H1 (cell line): ENCODE measurements at regions of chr5 and their contacts with region 1.

Region 1: GRCh38 chr5:132963175-132964104 is at the start of gene AFF4:
- DNase-seq: peak; percentile 88 to 95
- H3K4me3 ChIP-seq: peak within 1 kb of the TSS; percentile 77 to 95 (median 86)
- H3K27ac ChIP-seq: peak within 1 kb of the TSS; percentile 89
- H3K4me1 ChIP-seq: no peaks in the 10 kb centered on the region
- H3K27me3 ChIP-seq: no peaks in the 10 kb centered on the region
- CTCF ChIP-seq: no peak
- EP300 ChIP-seq: peak; percentile 26 to 74; a peak in 2 of 3 replicates
- POLR2A ChIP-seq: peak; percentile 43 to 93
- RAD21 ChIP-seq: no peak
- total RNA-seq, gene AFF4: 61.4 and 63.7 TPM in 2 replicates

Region 2: DNA sequence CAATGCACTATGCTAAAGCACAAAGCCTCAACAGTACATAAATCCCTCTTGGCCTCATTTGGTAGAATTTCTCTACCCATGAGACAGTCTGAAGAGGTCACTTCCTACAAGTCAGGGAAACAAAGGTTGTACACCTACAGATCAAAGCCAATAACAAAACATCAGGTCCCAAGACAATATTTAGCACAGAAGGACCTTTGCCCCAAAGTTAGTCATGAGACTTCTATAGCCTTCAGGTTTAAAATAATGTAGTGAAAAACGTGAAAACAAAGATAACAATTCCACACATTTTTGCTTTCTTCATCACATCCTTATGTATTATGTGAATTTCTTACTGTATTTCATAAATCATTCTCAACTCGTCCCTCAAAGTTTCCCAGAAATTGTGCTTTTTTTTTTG is 15.8 kb before region 1 on chr5:
- CTCF ChIA-PET with region 1: no interaction called
- POLR2A ChIA-PET with region 1: interaction called, 12 read pairs
- DNase-seq: no peak
- H3K4me3 ChIP-seq: no peak overlapping the region
- H3K27ac ChIP-seq: no peak overlapping the region
- H3K4me1 ChIP-seq: no peaks in the 10 kb centered on the region
- H3K27me3 ChIP-seq: no peaks in the 10 kb centered on the region
- CTCF ChIP-seq: no peak
- EP300 ChIP-seq: no peak
- POLR2A ChIP-seq: no peak
- RAD21 ChIP-seq: no peak

Region 3: DNA sequence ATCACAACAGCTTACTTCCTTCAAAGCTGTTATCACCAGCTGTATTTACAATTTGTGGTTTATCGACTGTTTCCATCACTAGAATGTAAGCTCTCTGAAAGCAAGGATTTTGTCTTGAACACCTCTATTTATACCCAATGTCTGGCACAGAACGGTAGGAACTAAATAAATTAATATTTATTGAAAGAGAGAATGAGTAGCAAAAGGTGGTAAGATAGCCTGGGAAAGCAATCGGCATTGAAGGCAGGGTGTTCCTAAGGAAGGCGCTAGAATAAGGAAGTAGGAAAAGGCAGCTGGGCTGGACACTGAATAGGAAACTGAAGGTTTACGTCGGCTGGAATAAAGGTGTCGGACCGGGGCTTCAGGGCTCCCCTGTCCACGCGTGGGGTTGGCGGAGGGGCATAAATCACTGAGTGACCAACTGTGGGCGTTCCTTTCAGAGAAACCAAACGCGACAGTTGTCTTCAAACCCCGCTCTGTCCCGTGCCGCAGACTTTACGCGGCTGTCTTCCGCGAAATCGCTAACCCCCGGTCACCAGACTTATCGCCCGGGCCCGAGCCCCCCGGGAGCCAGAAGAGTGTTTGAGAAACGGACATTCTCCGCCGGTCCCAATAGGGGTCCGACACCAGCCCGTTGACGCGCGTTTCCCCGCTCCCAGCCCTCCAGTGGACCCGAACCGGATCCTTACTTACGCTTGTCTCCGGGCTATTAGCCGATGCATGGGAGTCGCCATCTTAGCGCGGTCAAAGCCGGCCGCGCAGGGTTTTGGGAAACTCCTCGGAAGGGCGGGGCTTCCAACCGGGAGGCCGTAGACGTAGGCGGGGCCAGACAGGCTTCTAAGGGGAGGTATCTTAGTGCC is 62.6 kb after region 1 on chr5 and contains the start of gene ZCCHC10:
- CTCF ChIA-PET with region 1: interaction called, 4 read pairs
- POLR2A ChIA-PET with region 1: interaction called, 10 read pairs
- DNase-seq: peak; percentile 89 to 96
- H3K4me3 ChIP-seq: peak within 1 kb of the TSS; percentile 93 to 100 (median 98)
- H3K27ac ChIP-seq: peak within 1 kb of the TSS; percentile 89
- H3K4me1 ChIP-seq: no peaks in the 10 kb centered on the region; a peak in 1 of 7 replicates
- H3K27me3 ChIP-seq: no peaks in the 10 kb centered on the region
- CTCF ChIP-seq: no peak
- EP300 ChIP-seq: no peak
- POLR2A ChIP-seq: peak; percentile 84 to 97
- RAD21 ChIP-seq: no peak
- total RNA-seq, gene ZCCHC10: 32.9 and 36.6 TPM in 2 replicates

Region 4: DNA sequence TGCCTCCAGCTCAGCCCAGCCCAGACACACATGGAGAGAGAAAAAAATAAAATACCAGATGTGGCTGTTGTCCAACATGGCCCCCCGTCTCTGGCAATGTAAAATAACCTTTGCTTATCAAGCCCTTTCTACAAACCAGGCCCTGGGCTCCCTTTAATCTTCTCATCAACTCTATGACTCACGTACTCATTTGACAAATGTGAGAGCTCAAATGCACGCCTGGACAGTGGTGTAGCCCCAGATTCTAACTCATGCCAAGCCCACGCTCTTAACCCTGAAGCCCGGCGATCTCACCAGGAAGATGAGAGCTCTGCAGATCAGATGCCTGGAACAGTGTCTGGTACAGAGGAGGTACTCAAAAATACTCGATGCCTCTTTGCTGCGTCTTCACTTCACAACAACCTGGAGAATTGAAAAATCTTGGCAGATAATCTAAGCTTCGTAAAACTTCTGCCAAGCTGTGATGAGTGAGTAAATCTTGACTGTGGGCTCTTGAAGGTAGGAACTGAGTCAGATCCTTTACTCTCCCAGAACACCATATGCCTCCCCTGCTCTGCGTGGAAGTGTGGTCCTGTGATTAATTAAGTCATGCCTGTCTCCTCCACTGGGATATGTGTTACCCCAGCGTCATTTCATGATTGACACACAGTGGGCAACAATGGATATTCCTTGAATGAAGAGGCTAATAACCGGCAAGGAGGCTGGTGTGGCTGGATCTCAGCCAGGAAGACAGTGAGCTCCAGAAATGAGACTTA is 750.9 kb after region 1 on chr5:
- CTCF ChIA-PET with region 1: no interaction called
- POLR2A ChIA-PET with region 1: no interaction called
- DNase-seq: no peak
- H3K4me3 ChIP-seq: no peak overlapping the region
- H3K27ac ChIP-seq: no peak overlapping the region
- H3K4me1 ChIP-seq: no peaks in the 10 kb centered on the region
- H3K27me3 ChIP-seq: no peaks in the 10 kb centered on the region; a peak in 1 of 7 replicates
- CTCF ChIP-seq: no peak
- EP300 ChIP-seq: no peak
- POLR2A ChIP-seq: no peak
- RAD21 ChIP-seq: no peak